B cell (primary cell): ENCODE measurements at regions of chr4 and their contacts with region 1.

Region 1: DNA sequence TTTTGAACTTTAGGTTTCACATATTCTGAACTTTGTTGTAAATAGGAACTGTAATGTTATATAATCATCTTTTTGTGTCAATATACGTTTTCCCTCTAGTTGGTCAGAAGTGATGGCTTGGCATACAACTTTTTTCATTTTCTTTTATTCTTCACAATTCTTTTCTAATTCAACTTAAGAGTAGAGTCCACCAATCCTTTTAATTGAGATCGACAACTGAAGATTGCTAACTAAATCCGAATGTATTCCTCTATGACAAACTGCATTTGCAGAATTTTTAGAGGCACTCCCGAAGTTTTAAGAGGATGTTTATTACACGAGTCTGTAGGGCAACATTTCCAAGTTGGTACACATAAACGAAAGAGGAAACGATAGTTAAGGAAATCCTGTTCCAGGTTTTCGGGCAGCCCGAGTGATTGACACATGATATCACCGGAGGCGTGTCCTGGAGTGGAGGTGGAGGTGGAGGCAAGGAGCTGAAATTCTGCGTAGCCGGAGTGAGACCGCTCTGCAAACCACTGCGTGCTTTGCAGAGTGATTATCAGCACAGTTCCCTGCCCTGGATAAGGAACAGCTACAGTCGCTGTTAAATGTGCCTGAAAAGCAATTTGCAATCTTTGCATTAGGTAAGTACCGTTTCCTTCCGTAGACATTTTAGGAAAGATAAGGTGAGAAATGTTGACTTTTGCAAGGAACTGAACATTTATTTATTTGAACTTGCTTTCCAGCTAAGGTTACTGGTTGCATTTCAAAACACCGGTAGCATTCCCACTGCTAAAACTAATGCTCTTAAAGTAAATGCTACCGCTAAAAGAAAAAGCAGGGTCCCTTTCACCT is at the start of gene SPRY1:
- DNase-seq: peak; percentile 86
- ATAC-seq: peak; percentile 45
- H3K4me3 ChIP-seq: peak within 1 kb of the TSS; percentile 68 to 88 (median 73)
- H3K4me3 Mint-ChIP-seq: peak within 1 kb of the TSS; percentile 96
- H3K27ac ChIP-seq: peak within 1 kb of the TSS; percentile 61 to 84
- H3K27ac Mint-ChIP-seq: peak within 1 kb of the TSS; percentile 74
- H3K4me1 ChIP-seq: peaks cover 18 to 33% of the 10 kb centered on the region in 2 donors
- H3K4me1 Mint-ChIP-seq: peaks cover 29% of the 10 kb centered on the region
- H3K27me3 ChIP-seq: peaks cover 0 to 8% (median 0%) of the 10 kb centered on the region in 4 experiments
- H3K27me3 Mint-ChIP-seq: peaks cover 21% of the 10 kb centered on the region
- CTCF ChIP-seq: no peak
- total RNA-seq, gene SPRY1: 6.9 and 9.8 TPM in 2 replicates

Region 2: DNA sequence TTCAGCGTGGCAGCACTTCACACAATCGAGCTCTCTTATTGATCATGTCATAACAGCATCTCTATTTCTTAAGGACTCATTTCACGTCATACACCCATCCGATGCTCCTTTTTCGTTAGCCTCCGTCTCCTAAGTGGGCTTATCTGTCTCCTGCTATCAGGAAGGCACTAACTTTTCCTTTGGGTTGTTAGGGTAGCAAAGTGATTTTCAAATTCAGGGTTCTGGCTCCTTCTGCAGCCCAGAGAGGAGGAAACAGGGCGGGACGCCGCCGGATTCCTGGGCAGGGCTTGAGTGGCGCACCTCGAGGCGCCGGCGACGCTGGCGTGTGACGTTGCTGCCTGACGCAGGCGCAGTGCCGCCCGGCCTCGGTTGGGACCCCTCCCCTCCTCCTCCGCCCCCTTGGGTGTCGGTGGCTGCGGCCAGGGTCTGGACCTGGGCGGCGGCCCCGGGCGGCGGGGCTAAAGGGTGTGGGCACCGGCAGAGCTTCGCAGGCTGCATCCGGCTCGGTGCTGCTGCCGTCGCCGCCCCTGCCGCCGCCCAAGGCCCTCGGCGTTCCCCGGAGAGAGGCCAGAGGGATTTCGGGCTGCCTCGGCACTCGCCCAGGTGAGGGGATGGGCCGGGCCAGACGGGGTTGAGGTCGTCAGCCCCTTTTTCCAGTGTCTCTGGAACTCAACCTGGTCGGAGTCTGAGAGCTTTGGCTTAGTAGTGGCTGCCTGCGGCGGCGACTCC is 1244.4 kb before region 1 on chr4 and contains the start of gene BLTP1:
- CTCF ChIA-PET with region 1: no interaction called
- POLR2A ChIA-PET with region 1: no interaction called
- intact Hi-C with region 1: loop called (anchors 5 kb)
- DNase-seq: peak; percentile 91
- ATAC-seq: peak; percentile 96
- H3K4me3 ChIP-seq: peak within 1 kb of the TSS; percentile 73 to 89 (median 86)
- H3K4me3 Mint-ChIP-seq: peak within 1 kb of the TSS; percentile 92
- H3K27ac ChIP-seq: peak within 1 kb of the TSS; percentile 73 to 87
- H3K27ac Mint-ChIP-seq: peak within 1 kb of the TSS; percentile 91
- H3K4me1 ChIP-seq: peaks cover 20 to 25% of the 10 kb centered on the region in 2 donors
- H3K4me1 Mint-ChIP-seq: peaks cover 52% of the 10 kb centered on the region
- H3K27me3 ChIP-seq: no peaks in the 10 kb centered on the region
- H3K27me3 Mint-ChIP-seq: peaks cover 3% of the 10 kb centered on the region
- CTCF ChIP-seq: no peak
- total RNA-seq, gene BLTP1: 86.3 and 96.8 TPM in 2 replicates

Region 3: DNA sequence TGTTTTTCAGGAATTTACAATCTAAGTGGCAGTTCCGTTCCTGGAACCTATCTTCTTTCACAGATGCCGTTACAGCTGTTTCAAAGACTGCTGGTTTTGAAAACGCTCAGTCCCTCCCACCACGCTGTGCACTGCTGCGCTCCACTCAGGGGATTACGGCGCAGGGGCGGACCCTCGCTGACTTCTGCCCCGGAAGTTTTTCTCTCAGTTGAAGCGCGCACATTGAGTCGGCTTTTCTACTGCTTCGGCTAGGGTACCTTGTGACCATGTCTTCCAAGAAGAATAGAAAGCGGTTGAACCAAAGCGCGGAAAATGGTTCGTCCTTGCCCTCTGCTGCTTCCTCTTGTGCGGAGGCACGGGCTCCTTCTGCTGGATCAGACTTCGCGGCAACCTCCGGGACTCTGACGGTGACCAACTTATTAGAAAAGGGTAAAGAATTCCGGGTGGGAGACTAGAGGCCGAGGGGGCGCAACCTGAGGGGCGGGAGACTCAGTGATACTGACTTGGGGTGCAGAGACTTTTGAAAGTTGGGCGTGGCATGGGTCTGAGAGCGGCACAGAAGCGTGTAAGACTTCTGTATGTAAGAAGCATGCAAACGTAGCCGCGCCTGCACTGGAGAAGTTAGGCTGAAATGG is 473.5 kb before region 1 on chr4:
- CTCF ChIA-PET with region 1: no interaction called
- POLR2A ChIA-PET with region 1: no interaction called
- intact Hi-C with region 1: loop called (anchors 2 kb)
- DNase-seq: peak; percentile 87
- ATAC-seq: peak; percentile 96
- H3K4me3 ChIP-seq: peak overlapping the region; percentile 68 to 92 (median 85)
- H3K4me3 Mint-ChIP-seq: peak overlapping the region; percentile 96
- H3K27ac ChIP-seq: peak overlapping the region; percentile 54 to 76
- H3K27ac Mint-ChIP-seq: peak overlapping the region; percentile 91
- H3K4me1 ChIP-seq: peaks cover 13 to 16% of the 10 kb centered on the region in 2 donors
- H3K4me1 Mint-ChIP-seq: peaks cover 11% of the 10 kb centered on the region
- H3K27me3 ChIP-seq: no peaks in the 10 kb centered on the region
- H3K27me3 Mint-ChIP-seq: no peaks in the 10 kb centered on the region
- CTCF ChIP-seq: no peak

Region 4: DNA sequence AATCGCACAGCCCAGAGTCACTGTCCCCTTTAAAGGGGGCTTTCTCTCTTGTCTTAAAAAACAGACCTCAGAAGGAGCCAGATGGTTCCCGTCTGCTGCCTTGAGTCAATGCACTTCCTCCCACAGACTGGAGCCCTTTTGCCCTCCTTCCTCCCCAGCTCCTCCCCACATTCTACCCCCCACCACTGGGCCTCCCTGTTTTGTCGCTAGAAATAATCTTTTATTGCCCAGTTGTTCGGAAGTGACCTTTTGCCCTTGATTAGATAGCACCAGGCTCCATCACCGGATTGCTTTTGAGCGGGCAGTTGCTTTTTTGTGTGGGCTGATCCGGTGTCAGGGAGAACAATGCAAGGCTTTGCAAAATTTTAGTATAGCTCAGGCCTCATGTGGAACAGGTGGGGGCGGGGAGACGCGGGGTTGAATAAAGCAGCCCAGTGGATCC is 47.8 kb after region 1 on chr4:
- CTCF ChIA-PET with region 1: interaction called, 4 read pairs
- POLR2A ChIA-PET with region 1: interaction called, 3 read pairs
- intact Hi-C with region 1: loop called (anchors 1 kb)
- DNase-seq: peak; percentile 78
- ATAC-seq: peak; percentile 78
- H3K4me3 ChIP-seq: peak overlapping the region; percentile 13 to 57 (median 41)
- H3K4me3 Mint-ChIP-seq: peak overlapping the region; percentile 80
- H3K27ac ChIP-seq: peak overlapping the region; percentile 66 to 96
- H3K27ac Mint-ChIP-seq: peak overlapping the region; percentile 83
- H3K4me1 ChIP-seq: peaks cover 53 to 55% of the 10 kb centered on the region in 2 donors
- H3K4me1 Mint-ChIP-seq: peaks cover 37% of the 10 kb centered on the region
- H3K27me3 ChIP-seq: no peaks in the 10 kb centered on the region
- H3K27me3 Mint-ChIP-seq: no peaks in the 10 kb centered on the region
- CTCF ChIP-seq: no peak

Region 5: GRCh38 chr4:123505095-123506010 is 108.8 kb after region 1 on chr4:
- CTCF ChIA-PET with region 1: no interaction called
- POLR2A ChIA-PET with region 1: no interaction called
- intact Hi-C with region 1: loop called (anchors 5 kb)
- DNase-seq: peak; percentile 45
- ATAC-seq: peak; percentile 49
- H3K4me3 ChIP-seq: peak overlapping the region; percentile 46 to 84 (median 60)
- H3K4me3 Mint-ChIP-seq: peak overlapping the region; percentile 95
- H3K27ac ChIP-seq: no peak overlapping the region
- H3K27ac Mint-ChIP-seq: peak overlapping the region; percentile 81
- H3K4me1 ChIP-seq: peaks cover 16 to 21% of the 10 kb centered on the region in 2 donors
- H3K4me1 Mint-ChIP-seq: peaks cover 26% of the 10 kb centered on the region
- H3K27me3 ChIP-seq: peaks cover 0 to 3% (median 0%) of the 10 kb centered on the region in 4 experiments
- H3K27me3 Mint-ChIP-seq: peaks cover 29% of the 10 kb centered on the region
- CTCF ChIP-seq: no peak

Region 6: DNA sequence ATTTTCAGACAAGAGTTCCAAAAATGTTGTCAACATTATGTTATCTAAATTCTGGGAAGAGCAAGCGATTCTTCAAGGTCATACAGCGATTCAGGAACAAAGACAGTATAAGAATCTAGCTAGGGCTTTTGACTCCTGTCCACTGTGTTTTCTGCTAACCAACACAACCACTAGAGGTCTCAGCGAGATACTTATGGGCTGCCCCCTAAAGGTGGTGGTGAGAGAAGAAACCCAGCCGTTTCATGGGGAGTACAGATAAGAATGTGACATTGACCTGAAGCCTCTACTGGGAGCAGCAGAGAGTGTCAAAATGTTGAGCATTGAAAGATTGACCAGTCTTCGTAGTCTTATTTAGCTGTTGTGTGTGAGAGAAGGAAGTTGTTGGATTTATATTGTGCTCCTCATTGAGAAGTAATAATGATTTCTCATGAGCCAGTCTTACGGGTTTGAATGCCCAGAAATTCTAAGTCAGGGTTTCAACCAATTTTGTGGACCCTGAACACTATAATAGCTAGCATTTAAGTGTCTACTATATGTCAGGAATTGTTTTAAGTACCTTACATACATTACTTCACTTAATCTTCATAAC is 168.3 kb after region 1 on chr4:
- CTCF ChIA-PET with region 1: interaction called, 28 read pairs
- POLR2A ChIA-PET with region 1: no interaction called
- intact Hi-C with region 1: loop called (anchors 1 kb)
- DNase-seq: peak; percentile 81
- ATAC-seq: peak; percentile 100
- H3K4me3 ChIP-seq: no peak overlapping the region
- H3K4me3 Mint-ChIP-seq: no peak overlapping the region
- H3K27ac ChIP-seq: no peak overlapping the region
- H3K27ac Mint-ChIP-seq: no peak overlapping the region
- H3K4me1 ChIP-seq: peaks cover 3 to 6% of the 10 kb centered on the region in 2 donors
- H3K4me1 Mint-ChIP-seq: peaks cover 2% of the 10 kb centered on the region
- H3K27me3 ChIP-seq: no peaks in the 10 kb centered on the region
- H3K27me3 Mint-ChIP-seq: peaks cover 17% of the 10 kb centered on the region
- CTCF ChIP-seq: peak; percentile 90

Region 7: DNA sequence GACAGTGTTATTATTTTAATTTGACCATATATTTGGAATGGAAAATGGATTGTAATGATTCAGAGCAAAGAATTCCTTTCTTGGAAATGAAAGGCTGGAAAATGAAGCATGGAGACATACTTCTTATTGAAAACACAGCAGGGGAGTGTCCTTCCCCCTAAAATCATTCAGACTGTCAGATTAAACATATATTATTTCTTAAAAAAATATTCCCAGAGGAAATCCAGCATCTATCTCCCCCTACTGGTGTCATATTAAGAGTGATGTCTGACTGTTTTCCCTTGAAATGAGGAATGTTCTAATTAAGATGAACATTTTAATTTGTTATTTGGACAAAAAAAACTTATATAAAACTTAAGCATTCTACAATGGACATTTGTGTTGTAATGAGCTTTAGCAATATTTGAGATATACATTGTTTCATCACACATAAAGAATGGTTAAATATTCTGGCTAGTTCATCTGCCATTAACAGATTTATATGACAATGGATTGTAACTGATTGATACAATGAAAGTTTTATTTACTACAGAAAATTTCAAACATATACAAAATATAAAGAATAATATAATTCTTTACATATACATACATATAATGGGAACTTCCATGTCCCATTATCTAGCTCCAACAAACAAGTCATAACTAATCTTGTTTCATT is 264.7 kb after region 1 on chr4:
- CTCF ChIA-PET with region 1: interaction called, 38 read pairs
- POLR2A ChIA-PET with region 1: no interaction called
- intact Hi-C with region 1: loop called (anchors 1 kb)
- DNase-seq: peak; percentile 30
- ATAC-seq: no peak
- H3K4me3 ChIP-seq: no peak overlapping the region
- H3K4me3 Mint-ChIP-seq: no peak overlapping the region
- H3K27ac ChIP-seq: no peak overlapping the region
- H3K27ac Mint-ChIP-seq: no peak overlapping the region
- H3K4me1 ChIP-seq: peaks cover 3 to 9% of the 10 kb centered on the region in 2 donors
- H3K4me1 Mint-ChIP-seq: peaks cover 8% of the 10 kb centered on the region
- H3K27me3 ChIP-seq: no peaks in the 10 kb centered on the region
- H3K27me3 Mint-ChIP-seq: peaks cover 17% of the 10 kb centered on the region
- CTCF ChIP-seq: peak; percentile 52